Right cardiac atrium (tissue), 5 donors: ENCODE measurements at regions of chr20 and their contacts with region 1.

Region 1: GRCh38 chr20:47638851-47639250 is 137.2 kb downstream of the NCOA3 start:
- DNase-seq: no peak
- ATAC-seq: peak; percentile 48 to 55
- H3K4me3 ChIP-seq: no peak overlapping the region
- H3K27ac ChIP-seq: no peak overlapping the region
- H3K4me1 ChIP-seq: no peaks in the 10 kb centered on the region
- H3K27me3 ChIP-seq: no peaks in the 10 kb centered on the region

Region 2: DNA sequence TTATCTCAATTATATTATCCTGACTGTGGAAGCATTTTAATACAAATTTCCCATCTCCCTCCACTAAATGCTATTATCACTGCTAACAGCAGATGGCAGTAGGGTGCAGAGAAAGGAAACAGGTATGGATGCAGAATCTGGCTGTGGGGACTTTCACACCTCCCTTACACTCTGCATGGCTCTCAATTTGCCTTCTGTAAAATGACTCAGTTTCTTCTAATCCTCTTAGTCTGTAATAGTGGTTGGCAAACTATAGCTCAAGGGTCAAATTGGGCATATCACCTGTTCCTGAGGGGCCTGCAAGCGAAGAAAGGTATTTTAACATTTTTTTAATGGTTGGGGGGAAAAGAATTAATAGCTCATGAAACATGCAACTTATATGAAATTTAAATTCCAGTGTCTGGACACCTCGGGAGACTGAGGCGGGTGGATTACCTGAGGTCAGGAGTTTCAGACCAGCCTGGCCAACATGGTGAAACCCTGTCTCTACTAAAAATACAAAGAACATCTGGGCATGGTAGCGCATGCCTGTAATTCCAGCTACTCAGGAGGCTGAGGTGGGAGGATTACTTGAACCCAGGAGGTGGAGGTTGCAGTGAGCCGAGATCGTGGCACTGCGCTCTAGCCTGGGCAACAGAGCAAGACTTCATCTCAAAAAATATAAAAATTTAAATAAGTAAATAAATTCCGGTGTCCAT is 365.8 kb before region 1 on chr20:
- intact Hi-C with region 1: loop called in 1 of 4 experiments (anchors 10 kb)
- DNase-seq: no peak
- ATAC-seq: peak; percentile 50 to 72
- H3K4me3 ChIP-seq: no peak overlapping the region
- H3K27ac ChIP-seq: no peak overlapping the region
- H3K4me1 ChIP-seq: no peaks in the 10 kb centered on the region
- H3K27me3 ChIP-seq: no peaks in the 10 kb centered on the region

Region 3: GRCh38 chr20:47551841-47552240 is 87.0 kb before region 1 on chr20:
- intact Hi-C with region 1: no loop called
- DNase-seq: no peak
- ATAC-seq: no peak
- H3K4me3 ChIP-seq: no peak overlapping the region
- H3K27ac ChIP-seq: no peak overlapping the region
- H3K4me1 ChIP-seq: no peaks in the 10 kb centered on the region
- H3K27me3 ChIP-seq: no peaks in the 10 kb centered on the region

Region 4: GRCh38 chr20:47704755-47705493 is 66.1 kb after region 1 on chr20:
- intact Hi-C with region 1: no loop called
- DNase-seq: peak in 2 of 3 donors; percentile 55 to 66
- ATAC-seq: peak; percentile 75 to 94
- H3K4me3 ChIP-seq: no peak overlapping the region
- H3K27ac ChIP-seq: peak overlapping the region; percentile 16
- H3K4me1 ChIP-seq: peaks cover 5% of the 10 kb centered on the region
- H3K27me3 ChIP-seq: no peaks in the 10 kb centered on the region